ACHN (cell line): ENCODE measurements at regions of chrX and their contacts with region 1.

Region 1: DNA sequence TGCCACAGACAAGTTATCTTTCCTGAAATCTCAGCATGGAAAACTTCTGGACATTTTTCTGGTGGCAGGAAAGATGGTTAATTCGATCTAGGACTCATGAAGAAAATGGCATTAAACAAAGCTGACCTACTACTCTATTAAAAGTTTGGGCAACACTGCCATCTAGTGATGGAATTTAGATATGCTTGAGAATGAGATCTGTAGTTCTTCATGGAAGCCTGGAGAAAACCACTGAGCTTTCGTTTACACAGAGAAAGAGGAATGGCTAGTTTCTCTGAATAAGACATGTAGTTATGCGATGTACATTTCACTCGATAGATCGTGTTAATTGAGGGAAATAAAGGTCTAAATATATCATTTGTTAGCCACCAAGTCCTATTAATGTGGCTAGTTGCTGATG is 51.7 kb upstream of the CHRDL1 start:
- DNase-seq: peak; percentile 51

Region 2: GRCh38 chrX:110442640-110443039 is 404.7 kb before region 1 on chrX:
- in situ Hi-C with region 1: loop called (anchors 25 kb)
- DNase-seq: peak; percentile 67

Region 3: DNA sequence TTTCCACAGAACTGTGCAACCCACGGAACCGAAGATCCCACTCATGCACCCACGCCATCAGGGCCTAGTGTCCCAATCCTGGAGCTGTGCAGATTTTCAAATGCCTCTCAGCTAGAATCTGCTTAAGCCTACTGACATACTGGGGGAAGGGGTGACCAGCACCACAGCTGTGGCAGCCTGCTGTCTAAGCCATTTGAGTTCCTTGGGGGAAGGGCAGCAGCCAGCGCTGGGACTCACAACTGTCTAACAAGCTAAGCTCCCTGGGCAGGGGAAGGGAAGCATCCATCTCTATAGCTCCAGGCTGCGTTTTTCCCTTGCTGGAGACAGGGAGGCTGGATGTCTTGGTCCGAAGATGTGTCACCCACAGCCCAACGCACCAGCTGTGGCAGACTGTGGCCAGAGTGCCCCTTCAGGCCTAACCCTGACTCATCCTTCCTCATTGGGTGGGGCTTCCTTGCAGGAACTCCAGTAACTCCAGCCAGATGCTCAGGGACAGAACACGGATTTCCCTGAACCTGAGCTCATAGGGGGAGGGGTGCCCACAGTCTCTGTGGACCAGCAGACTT is 246.5 kb before region 1 on chrX:
- in situ Hi-C with region 1: no loop called
- DNase-seq: no peak